ENCODE measurements at regions of chr6 and their contacts with region 1.

Region 1: DNA sequence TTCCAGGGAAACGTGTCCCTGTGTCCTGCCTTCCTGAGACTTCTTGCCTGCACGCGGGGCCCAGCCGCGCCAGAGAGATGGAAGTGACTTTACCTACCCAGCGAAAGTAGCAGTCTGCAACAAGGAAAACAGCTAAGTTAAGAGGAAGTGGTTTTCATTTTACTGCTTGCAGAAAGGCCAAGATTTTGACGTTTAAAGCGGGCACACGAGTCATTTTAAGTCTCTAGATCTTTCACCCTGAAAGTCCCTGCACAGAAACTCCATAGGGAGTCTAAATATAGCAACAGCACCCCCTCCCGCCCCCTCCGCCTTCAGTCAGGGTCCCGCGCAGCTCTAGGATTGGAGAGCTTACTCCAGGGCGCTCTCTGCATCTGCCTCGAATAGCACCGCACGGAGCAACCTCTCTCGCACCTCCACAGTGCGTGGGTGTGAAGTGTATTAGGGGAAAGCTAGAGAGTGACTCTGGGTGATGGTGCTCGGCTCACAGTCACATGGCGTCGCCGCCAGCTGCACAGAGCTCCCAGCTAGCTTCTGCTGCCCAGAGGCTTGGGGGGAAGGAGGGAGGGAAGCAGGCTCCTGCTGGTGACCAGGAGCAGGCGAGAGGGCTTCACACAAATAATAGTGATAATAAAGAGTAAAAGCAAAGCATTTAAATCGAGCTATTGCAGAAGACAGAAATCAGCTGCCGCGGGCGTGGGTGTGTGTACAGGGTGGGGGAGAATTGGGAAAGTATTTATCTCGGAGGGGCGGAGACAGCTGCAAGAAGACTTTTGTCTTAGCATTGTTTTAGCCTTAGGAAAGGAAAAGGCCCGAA is 1.8 kb upstream of the KCNQ5 start:
- DNase-seq: peak; percentile 36
- ATAC-seq: peak; percentile 40
- H3K4me3 Mint-ChIP-seq: peak overlapping the region; percentile 79
- H3K27ac Mint-ChIP-seq: no peak overlapping the region
- H3K4me1 Mint-ChIP-seq: peaks cover 23% of the 10 kb centered on the region
- H3K27me3 Mint-ChIP-seq: peaks cover 63% of the 10 kb centered on the region
- CTCF ChIP-seq: no peak

Region 2: GRCh38 chr6:72411872-72412708 is 208.0 kb before region 1 on chr6:
- CTCF ChIA-PET with region 1: interaction called, 19 read pairs
- POLR2A ChIA-PET with region 1: no interaction called
- DNase-seq: peak; percentile 61
- ATAC-seq: peak; percentile 83
- H3K4me3 Mint-ChIP-seq: no peak overlapping the region
- H3K27ac Mint-ChIP-seq: peak overlapping the region; percentile 32; the same call in 1 of the 2 replicates
- H3K4me1 Mint-ChIP-seq: peaks cover 5% of the 10 kb centered on the region
- H3K27me3 Mint-ChIP-seq: no peaks in the 10 kb centered on the region
- CTCF ChIP-seq: peak; percentile 100

Region 3: GRCh38 chr6:72522719-72523141 is 97.4 kb before region 1 on chr6:
- CTCF ChIA-PET with region 1: interaction called, 10 read pairs
- POLR2A ChIA-PET with region 1: no interaction called
- DNase-seq: peak; percentile 66
- ATAC-seq: peak; percentile 100
- H3K4me3 Mint-ChIP-seq: no peak overlapping the region
- H3K27ac Mint-ChIP-seq: no peak overlapping the region; the same call in 1 of the 2 replicates
- H3K4me1 Mint-ChIP-seq: no peaks in the 10 kb centered on the region
- H3K27me3 Mint-ChIP-seq: no peaks in the 10 kb centered on the region
- CTCF ChIP-seq: peak; percentile 31; the same call in 1 of the 2 replicates

Region 4: DNA sequence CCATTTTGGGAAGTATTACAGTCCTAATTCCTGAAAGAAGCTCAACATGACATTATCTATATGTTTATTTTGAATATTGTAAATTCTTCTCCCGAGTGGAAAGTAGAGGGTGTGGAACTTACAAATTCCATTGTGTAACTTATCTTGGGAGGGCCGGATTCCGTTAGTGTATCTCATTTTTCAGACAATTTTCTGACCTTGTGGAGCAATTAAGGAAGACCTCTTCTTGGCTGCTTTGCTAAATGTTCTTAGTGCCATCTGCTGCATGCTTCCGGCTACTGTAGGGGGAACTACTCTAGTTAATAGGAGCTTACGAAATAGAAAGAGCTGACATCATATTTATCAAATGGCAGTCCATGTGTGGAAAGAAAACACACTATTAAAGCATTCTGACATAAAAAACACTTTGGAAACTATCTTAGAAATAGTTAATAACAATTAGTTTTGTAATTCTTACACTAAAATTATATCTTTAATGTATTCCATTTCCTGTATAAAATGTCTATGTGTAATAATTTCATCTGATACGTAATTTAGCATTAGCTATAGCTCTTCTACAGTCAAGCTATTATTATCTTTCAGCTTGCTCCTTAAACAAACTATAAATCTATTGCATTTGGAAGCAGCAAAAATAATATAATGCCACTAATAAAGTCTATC is 39.7 kb before region 1 on chr6:
- CTCF ChIA-PET with region 1: interaction called, 16 read pairs
- POLR2A ChIA-PET with region 1: no interaction called
- DNase-seq: peak; percentile 23
- ATAC-seq: peak; percentile 82
- H3K4me3 Mint-ChIP-seq: no peak overlapping the region
- H3K27ac Mint-ChIP-seq: no peak overlapping the region
- H3K4me1 Mint-ChIP-seq: no peaks in the 10 kb centered on the region
- H3K27me3 Mint-ChIP-seq: no peaks in the 10 kb centered on the region
- CTCF ChIP-seq: peak; percentile 20; the same call in 1 of the 2 replicates

Region 5: GRCh38 chr6:72589096-72589495 is 31.0 kb before region 1 on chr6:
- CTCF ChIA-PET with region 1: interaction called, 10 read pairs
- POLR2A ChIA-PET with region 1: no interaction called
- DNase-seq: no peak
- ATAC-seq: no peak
- H3K4me3 Mint-ChIP-seq: no peak overlapping the region
- H3K27ac Mint-ChIP-seq: no peak overlapping the region
- H3K4me1 Mint-ChIP-seq: no peaks in the 10 kb centered on the region
- H3K27me3 Mint-ChIP-seq: no peaks in the 10 kb centered on the region
- CTCF ChIP-seq: no peak

Region 6: GRCh38 chr6:72669324-72669723 is 49.2 kb after region 1 on chr6:
- CTCF ChIA-PET with region 1: interaction called, 11 read pairs
- POLR2A ChIA-PET with region 1: no interaction called
- DNase-seq: peak; percentile 21
- ATAC-seq: peak; percentile 93
- H3K4me3 Mint-ChIP-seq: no peak overlapping the region
- H3K27ac Mint-ChIP-seq: no peak overlapping the region
- H3K4me1 Mint-ChIP-seq: 0 out of 2 replicates have a peak, but pooled peaks cover 4% of the 10 kb centered on the region
- H3K27me3 Mint-ChIP-seq: no peaks in the 10 kb centered on the region
- CTCF ChIP-seq: no peak

Region 7: GRCh38 chr6:73129653-73130443 is 509.8 kb after region 1 on chr6:
- CTCF ChIA-PET with region 1: interaction called, 35 read pairs
- POLR2A ChIA-PET with region 1: no interaction called
- DNase-seq: peak; percentile 94
- ATAC-seq: peak; percentile 83
- H3K4me3 Mint-ChIP-seq: no peak overlapping the region
- H3K27ac Mint-ChIP-seq: no peak overlapping the region
- H3K4me1 Mint-ChIP-seq: peaks cover 10% of the 10 kb centered on the region
- H3K27me3 Mint-ChIP-seq: no peaks in the 10 kb centered on the region
- CTCF ChIP-seq: peak; percentile 93

Measured in WTC11 (cell line).